PC-3 (cell line): ENCODE measurements at regions of chr14 and their contacts with region 1.

Region 1: DNA sequence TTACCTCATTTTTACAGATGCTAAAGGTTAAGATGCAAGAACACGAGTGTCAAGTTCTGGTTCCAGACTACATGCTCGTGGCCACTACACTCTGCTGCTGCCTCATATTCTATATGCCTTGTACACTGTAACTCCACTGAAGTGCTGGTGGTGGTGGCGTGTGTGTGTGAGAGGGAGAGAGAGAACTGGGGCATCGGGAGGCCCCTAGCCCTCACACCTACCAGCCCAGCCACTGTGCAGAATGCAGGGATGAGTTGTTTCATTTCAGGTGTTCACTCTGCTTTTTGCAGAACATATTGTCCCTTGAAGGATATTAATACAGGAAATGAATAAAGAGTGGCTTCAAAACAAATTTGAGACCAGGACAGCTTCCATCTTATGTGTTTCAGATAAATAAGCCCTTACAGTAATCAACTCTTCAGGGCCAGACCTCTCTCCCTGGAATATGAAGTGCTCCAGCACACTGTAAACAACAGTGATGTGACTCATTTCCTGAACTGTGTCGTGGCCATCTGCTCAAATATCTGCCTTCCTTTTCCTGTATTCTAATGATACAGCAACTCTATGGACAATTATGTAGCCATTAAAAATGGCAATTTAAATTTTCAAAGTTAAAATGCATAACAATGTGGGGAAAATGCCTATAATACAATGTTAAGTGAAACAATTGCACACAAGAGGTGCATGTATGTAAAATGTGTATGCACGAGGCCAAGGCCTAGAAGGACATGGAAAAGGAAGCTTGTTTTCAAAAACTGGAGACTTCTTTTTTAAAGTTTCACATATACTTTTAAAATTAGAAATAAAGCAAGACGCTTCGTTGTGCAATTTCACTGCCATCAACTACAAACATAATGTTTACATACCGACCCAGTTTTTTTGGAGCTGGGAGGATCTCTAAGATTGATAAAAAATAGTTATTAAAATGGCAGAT is 215.4 kb downstream of the PELI2 start:
- DNase-seq: peak; percentile 91
- ATAC-seq: peak; percentile 100
- H3K4me3 ChIP-seq: no peak overlapping the region
- H3K27ac ChIP-seq: peak overlapping the region; percentile 1; the same call in 1 of the 2 replicates
- H3K4me1 ChIP-seq: peaks cover 11% of the 10 kb centered on the region
- H3K27me3 ChIP-seq: peaks cover 10% of the 10 kb centered on the region; the same call in 1 of the 2 replicates
- CTCF ChIP-seq: no peak

Region 2: GRCh38 chr14:56271970-56272369 is 61.7 kb before region 1 on chr14:
- CTCF ChIA-PET with region 1: no interaction called
- POLR2A ChIA-PET with region 1: no interaction called
- intact Hi-C with region 1: no loop called
- DNase-seq: peak; percentile 55
- ATAC-seq: no peak; the same call in 1 of the 2 replicates
- H3K4me3 ChIP-seq: no peak overlapping the region
- H3K27ac ChIP-seq: no peak overlapping the region
- H3K4me1 ChIP-seq: peaks cover 22% of the 10 kb centered on the region
- H3K27me3 ChIP-seq: peaks cover 35% of the 10 kb centered on the region; the same call in 1 of the 2 replicates
- CTCF ChIP-seq: no peak

Region 3: GRCh38 chr14:56358851-56359614 is 25.4 kb after region 1 on chr14:
- CTCF ChIA-PET with region 1: no interaction called
- POLR2A ChIA-PET with region 1: interaction called, 12 read pairs
- intact Hi-C with region 1: no loop called
- DNase-seq: no peak
- ATAC-seq: no peak
- H3K4me3 ChIP-seq: no peak overlapping the region
- H3K27ac ChIP-seq: no peak overlapping the region
- H3K4me1 ChIP-seq: no peaks in the 10 kb centered on the region
- H3K27me3 ChIP-seq: peaks cover 53% of the 10 kb centered on the region
- CTCF ChIP-seq: no peak